Breast epithelium (tissue), 4 donors: ENCODE measurements at regions of chr1 and their contacts with region 1.

Region 1: DNA sequence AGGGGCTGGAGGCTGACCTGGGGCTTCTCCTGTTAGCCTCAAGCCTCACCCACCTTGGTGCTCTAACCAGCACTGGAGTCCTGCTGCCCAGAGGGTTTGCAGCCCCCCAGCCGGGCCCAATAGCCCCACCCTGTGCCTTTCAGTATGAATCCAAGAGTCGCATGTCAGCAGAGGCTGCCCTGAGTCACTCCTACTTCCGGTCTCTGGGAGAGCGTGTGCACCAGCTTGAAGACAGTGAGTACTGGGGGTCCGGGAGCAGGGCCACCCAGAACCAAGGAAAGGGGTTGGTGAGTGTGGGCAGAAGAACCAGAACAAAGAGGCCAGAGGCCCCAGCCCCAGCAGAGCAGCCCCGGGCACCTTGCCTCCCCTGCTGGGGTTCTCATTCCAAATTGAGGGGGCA is 25.6 kb downstream of the CDK18 start:
- DNase-seq: no peak
- H3K4me3 ChIP-seq: no peak overlapping the region
- H3K27ac ChIP-seq: no peak overlapping the region
- H3K4me1 ChIP-seq: peaks cover 0 to 3% of the 10 kb centered on the region in 2 donors
- H3K27me3 ChIP-seq: no peaks in the 10 kb centered on the region
- CTCF ChIP-seq: no peak
- POLR2A ChIP-seq: no peak

Region 2: GRCh38 chr1:205077158-205077933 is 452.8 kb before region 1 on chr1:
- intact Hi-C with region 1: no loop called
- DNase-seq: no peak
- H3K4me3 ChIP-seq: no peak overlapping the region
- H3K27ac ChIP-seq: no peak overlapping the region
- H3K4me1 ChIP-seq: no peaks in the 10 kb centered on the region
- H3K27me3 ChIP-seq: no peaks in the 10 kb centered on the region
- CTCF ChIP-seq: no peak
- POLR2A ChIP-seq: no peak

Region 3: GRCh38 chr1:205504311-205504984 is 25.7 kb before region 1 on chr1 and contains the start of gene CDK18:
- intact Hi-C with region 1: no loop called
- DNase-seq: peak; percentile 69 to 80
- H3K4me3 ChIP-seq: peak within 1 kb of the TSS; percentile 50 to 80 (median 75)
- H3K27ac ChIP-seq: peak within 1 kb of the TSS; percentile 81 to 84
- H3K4me1 ChIP-seq: peaks cover 5 to 6% of the 10 kb centered on the region in 2 donors
- H3K27me3 ChIP-seq: no peaks in the 10 kb centered on the region
- CTCF ChIP-seq: no peak
- POLR2A ChIP-seq: no peak
- total RNA-seq, gene CDK18: 1.4 to 12.3 (median 9.2) TPM

Region 4: DNA sequence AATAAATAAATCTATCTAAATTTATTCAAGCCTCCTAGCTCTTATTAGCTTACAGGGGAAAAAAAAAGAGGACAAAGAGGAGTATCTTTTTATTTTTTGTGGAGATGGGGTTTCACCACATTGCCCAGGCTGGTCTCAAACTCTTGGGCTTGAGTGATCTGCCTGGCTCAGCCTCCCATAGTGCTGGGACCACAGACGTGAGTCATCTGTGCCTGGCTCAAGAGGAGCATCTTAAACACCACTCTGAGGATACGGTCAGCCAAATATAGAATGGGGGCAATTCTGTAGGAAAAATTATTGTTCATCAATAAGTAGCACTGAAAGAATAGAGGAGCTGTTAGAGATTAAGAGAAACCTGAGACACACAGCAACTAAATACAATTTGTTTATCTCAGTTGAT is 126.1 kb after region 1 on chr1:
- intact Hi-C with region 1: loop called (anchors 2 kb)
- DNase-seq: no peak
- H3K4me3 ChIP-seq: no peak overlapping the region
- H3K27ac ChIP-seq: no peak overlapping the region
- H3K4me1 ChIP-seq: no peaks in the 10 kb centered on the region
- H3K27me3 ChIP-seq: no peaks in the 10 kb centered on the region
- CTCF ChIP-seq: no peak
- POLR2A ChIP-seq: no peak

Region 5: GRCh38 chr1:205840146-205840923 is 310.2 kb after region 1 on chr1:
- intact Hi-C with region 1: no loop called
- DNase-seq: no peak
- H3K4me3 ChIP-seq: no peak overlapping the region
- H3K27ac ChIP-seq: no peak overlapping the region
- H3K4me1 ChIP-seq: no peaks in the 10 kb centered on the region
- H3K27me3 ChIP-seq: no peaks in the 10 kb centered on the region
- CTCF ChIP-seq: no peak
- POLR2A ChIP-seq: no peak